ENCODE measurements at regions of chr17 and their contacts with region 1.

Region 1: DNA sequence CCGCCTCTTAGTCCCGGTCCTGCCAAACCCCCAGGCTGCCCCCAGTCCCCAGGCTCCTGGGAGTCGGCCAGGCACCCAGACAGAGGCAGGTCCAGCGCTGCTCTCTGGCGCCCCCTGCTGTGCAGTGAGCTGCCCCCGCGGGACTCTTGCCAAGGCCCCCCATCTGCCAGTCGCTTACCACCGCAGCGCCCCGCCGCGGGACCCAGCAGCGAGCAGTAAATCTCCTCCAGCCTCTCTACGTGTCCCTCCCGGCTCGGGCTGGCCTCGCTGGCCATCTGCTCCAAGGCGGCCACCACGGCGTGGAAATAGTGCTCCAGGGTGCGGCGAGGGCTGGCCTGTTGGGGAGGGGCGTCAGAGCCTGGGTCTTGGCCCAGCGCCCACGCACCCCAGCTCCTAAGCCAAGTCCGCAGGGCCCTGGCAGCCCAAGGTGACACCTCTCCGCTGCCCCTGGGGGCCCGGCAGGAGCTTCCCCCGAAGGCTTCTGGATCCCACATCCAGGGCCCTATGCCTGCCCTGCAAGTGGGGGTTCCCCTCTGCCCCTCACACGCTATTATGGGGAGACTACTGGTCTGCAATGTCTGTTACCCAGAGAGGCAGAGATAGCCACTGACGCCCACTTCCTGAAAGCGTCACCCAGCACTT is 33.7 kb upstream of the MFSD6L start:
- DNase-seq: peak in 1 of 2 experiments; percentile 8
- H3K4me3 ChIP-seq: no peak overlapping the region
- H3K4me3 Mint-ChIP-seq: no peak overlapping the region
- H3K27ac Mint-ChIP-seq: no peak overlapping the region
- H3K4me1 ChIP-seq: no peaks in the 10 kb centered on the region
- H3K4me1 Mint-ChIP-seq: no peaks in the 10 kb centered on the region
- H3K27me3 ChIP-seq: no peaks in the 10 kb centered on the region
- H3K27me3 Mint-ChIP-seq: no peaks in the 10 kb centered on the region
- CTCF ChIP-seq: peak; percentile 3 to 31

Region 2: DNA sequence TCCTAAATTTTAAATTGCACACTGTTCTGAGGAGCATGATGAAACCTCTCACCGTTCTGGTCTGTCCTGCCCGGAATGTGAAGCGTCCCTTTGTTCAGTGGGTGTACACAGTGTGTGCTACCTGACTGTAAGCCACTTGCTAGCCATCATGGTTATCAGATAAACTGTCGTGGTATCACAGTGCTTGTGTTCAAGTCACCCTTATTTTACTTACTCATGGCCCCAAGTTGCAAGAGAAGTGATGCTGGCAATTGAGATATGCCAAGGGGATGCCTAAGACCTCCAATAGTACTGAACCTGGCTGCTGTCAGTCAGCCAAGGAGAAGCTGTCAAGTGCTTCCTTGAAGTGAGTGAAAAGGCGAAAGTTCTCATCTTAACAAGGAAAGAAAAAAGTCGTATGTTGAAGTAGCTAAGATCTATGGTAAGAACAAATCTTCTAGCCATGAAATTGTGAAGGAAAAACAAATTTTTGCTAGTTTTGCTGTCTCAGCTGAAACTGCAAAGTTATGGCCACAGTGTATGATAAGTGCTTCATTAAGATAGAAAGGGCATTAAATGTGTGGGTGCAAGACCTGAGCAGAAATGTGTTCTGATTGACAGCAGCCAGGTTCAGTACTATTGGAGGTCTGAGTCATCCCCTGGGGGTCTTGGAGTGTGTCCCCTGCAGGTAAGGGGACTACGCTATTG is 28.8 kb after region 1 on chr17:
- CTCF ChIA-PET with region 1: no interaction called
- POLR2A ChIA-PET with region 1: interaction called, 10 read pairs
- intact Hi-C with region 1: no loop called
- DNase-seq: no peak
- H3K4me3 ChIP-seq: no peak overlapping the region
- H3K4me3 Mint-ChIP-seq: no peak overlapping the region
- H3K27ac Mint-ChIP-seq: no peak overlapping the region
- H3K4me1 ChIP-seq: no peaks in the 10 kb centered on the region; the same call in 1 of the 2 replicates
- H3K4me1 Mint-ChIP-seq: no peaks in the 10 kb centered on the region
- H3K27me3 ChIP-seq: no peaks in the 10 kb centered on the region
- H3K27me3 Mint-ChIP-seq: no peaks in the 10 kb centered on the region
- CTCF ChIP-seq: no peak